ENCODE measurements at regions of chr10 and their contacts with region 1.

Region 1: GRCh38 chr10:114379631-114380041 is 24.7 kb downstream of the AFAP1L2 start:
- DNase-seq: no peak
- H3K4me3 ChIP-seq: no peak overlapping the region
- H3K27ac ChIP-seq: no peak overlapping the region
- H3K4me1 ChIP-seq: peaks cover 16% of the 10 kb centered on the region
- H3K27me3 ChIP-seq: no peaks in the 10 kb centered on the region
- CTCF ChIP-seq: no peak

Region 2: DNA sequence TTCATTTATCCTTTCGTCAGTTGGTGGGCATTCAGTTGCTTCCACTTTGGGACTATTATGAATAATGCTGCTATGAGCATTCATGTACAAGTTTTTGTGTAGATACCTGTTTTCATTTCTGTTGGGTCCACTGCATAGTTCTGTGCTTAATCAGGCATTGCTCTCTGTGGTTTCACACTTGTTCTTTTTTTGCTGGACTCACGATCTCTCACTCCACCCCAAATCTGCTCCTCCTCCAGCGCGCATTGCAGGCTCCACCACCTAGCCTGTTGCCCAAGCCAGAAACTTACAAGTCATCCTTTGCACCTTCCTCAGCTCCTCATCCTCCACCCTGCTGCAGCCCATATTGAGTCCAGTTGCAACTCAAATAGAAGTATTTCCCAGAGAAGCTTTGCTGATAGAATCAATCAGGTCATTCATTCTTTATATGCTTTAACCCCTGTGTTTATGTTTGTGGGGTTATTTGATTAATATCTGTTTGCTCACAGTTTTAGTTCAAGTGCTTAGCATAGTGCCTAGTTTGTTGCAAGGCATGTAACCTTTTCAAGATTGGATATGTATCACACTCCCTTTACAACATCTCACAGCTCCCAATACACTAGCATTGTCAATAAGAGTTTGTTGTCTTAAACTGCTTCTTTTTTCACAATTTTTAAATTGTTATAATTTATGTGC is 41.3 kb after region 1 on chr10:
- CTCF ChIA-PET with region 1: no interaction called
- dilution Hi-C with region 1: no loop called
- in situ Hi-C with region 1: no loop called
- intact Hi-C with region 1: no loop called
- DNase-seq: peak; percentile 85
- H3K4me3 ChIP-seq: no peak overlapping the region
- H3K27ac ChIP-seq: no peak overlapping the region
- H3K4me1 ChIP-seq: peaks cover 23% of the 10 kb centered on the region
- H3K27me3 ChIP-seq: no peaks in the 10 kb centered on the region
- CTCF ChIP-seq: no peak

Region 3: GRCh38 chr10:114432566-114433093 is 53.0 kb after region 1 on chr10:
- CTCF ChIA-PET with region 1: no interaction called
- dilution Hi-C with region 1: loop called (anchors 5 kb)
- in situ Hi-C with region 1: no loop called
- intact Hi-C with region 1: no loop called
- DNase-seq: no peak
- H3K4me3 ChIP-seq: no peak overlapping the region
- H3K27ac ChIP-seq: no peak overlapping the region
- H3K4me1 ChIP-seq: peaks cover 16% of the 10 kb centered on the region
- H3K27me3 ChIP-seq: no peaks in the 10 kb centered on the region
- CTCF ChIP-seq: no peak

Region 4: DNA sequence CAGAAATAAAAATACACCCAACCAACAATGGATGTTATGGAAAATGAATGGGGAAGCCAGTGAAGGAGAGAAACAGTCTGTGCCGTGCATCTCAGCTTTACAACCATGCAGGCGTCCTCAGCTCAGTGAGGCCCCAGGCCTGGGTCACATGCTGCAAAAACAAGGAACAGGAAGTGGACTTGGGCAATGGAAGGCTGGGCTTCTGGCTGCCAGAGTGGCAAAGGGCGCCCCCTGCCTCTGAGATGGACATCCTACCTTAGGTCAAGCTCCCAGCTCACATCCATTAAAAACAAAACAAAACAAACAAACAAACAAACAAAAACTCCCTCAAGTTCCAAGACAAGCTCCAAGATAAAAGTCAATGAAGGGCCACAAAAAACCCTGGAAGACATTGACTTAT is 79.3 kb after region 1 on chr10:
- CTCF ChIA-PET with region 1: no interaction called
- dilution Hi-C with region 1: loop called (anchors 5 kb)
- in situ Hi-C with region 1: no loop called
- intact Hi-C with region 1: no loop called
- DNase-seq: peak; percentile 21
- H3K4me3 ChIP-seq: no peak overlapping the region
- H3K27ac ChIP-seq: no peak overlapping the region
- H3K4me1 ChIP-seq: no peaks in the 10 kb centered on the region
- H3K27me3 ChIP-seq: no peaks in the 10 kb centered on the region
- CTCF ChIP-seq: peak; percentile 55 to 57

Measured in mammary epithelial cell (primary cell).